Naive thymus-derived CD4-positive, alpha-beta T cell (primary cell): ENCODE measurements at regions of chr9 and their contacts with region 1.

Region 1: DNA sequence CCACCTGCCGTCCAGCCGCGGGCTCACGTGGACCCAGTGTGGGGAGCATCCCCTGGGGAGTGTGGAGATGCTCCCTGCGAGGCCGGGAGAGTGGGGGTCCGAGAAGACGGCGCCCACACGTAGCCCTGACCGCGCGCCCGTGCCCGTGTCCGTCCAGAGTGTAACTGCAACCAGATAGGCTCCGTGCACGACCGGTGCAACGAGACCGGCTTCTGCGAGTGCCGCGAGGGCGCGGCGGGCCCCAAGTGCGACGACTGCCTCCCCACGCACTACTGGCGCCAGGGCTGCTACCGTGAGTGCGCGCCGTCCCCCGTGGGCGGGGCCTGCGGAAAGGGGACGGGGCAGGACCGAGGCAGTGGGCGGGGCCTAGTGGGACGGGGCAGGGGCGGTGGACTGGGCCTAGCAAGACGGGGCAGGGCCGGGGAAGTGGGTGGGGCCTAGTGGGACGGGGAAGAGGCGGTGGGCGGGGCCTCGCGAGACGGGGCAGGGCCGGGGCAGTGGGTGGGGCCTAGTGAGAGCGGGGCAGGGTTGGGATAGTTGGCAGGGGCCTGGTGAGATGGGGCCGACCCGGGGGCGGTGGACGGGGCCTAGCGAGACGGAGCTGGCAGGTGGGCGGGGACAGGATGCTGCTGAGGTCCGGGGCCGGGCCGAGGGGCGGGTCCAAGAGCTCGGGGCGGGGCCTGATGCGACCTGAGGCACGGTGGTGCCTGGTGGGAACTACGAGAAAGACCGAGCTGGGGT is 79.1 kb downstream of the NTNG2 start:
- DNase-seq: peak; percentile 98 to 100 (median 99)
- ATAC-seq: peak; percentile 94
- H3K4me3 ChIP-seq: peak overlapping the region; percentile 77
- H3K4me3 Mint-ChIP-seq: peak overlapping the region; percentile 97 to 99 (median 98)
- H3K27ac ChIP-seq: peak overlapping the region; percentile 69
- H3K27ac Mint-ChIP-seq: peak overlapping the region; percentile 90 to 96 (median 94)
- H3K4me1 ChIP-seq: peaks cover 11 to 17% of the 10 kb centered on the region in 2 donors
- H3K4me1 Mint-ChIP-seq: peaks cover 5 to 24% (median 21%) of the 10 kb centered on the region in 7 donors
- H3K27me3 ChIP-seq: no peaks in the 10 kb centered on the region
- H3K27me3 Mint-ChIP-seq: peaks cover 0 to 15% (median 0%) of the 10 kb centered on the region in 5 donors

Region 2: DNA sequence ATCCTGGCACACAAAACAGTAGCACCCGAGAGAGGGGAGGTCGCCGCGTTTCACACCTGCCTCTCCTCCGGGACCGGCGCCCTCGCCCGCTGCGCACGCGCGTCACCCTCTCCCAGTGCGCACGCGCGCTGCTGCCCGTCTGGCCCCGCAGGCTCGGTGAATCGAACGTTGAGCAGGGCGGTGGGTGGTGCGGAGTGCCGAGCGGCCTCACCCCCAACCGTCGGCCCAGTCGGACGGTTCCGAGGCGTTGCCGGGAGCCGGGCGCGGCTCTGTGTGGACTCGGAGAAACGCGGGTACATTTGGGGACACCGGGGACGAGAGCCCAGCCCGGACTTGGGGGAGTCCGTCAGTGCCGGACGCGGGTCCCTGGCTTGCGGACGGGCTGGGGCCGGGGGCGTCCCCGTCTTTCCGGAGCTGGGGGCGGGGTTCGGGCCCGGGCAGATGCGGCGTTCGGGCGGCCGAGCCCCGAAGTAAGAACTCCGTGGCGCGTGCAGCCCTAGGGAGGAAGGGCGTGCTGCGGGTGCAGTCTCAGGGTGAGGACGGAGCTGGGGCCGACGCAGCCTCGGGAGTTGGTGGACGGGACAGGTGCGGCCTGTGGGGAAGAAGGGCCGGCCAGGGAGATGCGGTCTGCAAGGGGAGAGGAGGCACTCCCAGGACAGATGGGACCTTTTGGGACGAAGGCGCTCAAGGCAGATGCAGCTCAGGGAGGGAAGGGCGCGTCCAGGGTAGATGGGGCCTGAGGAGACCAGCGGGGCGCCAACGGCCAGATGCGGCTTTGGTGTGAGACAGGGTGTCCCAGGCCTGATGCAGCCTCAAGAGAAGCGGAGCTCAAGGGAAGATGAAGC is 737.9 kb before region 1 on chr9 and contains the start of gene POMT1:
- CTCF ChIA-PET with region 1: interaction called, 3 read pairs
- POLR2A ChIA-PET with region 1: no interaction called
- intact Hi-C with region 1: loop called in 1 of 2 experiments (anchors 5 kb)
- DNase-seq: peak; percentile 85 to 93 (median 90)
- ATAC-seq: peak; percentile 77
- H3K4me3 ChIP-seq: peak within 1 kb of the TSS; percentile 79
- H3K4me3 Mint-ChIP-seq: peak within 1 kb of the TSS; percentile 89 to 99 (median 94)
- H3K27ac ChIP-seq: peak within 1 kb of the TSS; percentile 88
- H3K27ac Mint-ChIP-seq: peak within 1 kb of the TSS; percentile 88 to 98 (median 93)
- H3K4me1 ChIP-seq: peaks cover 41 to 42% of the 10 kb centered on the region in 2 donors
- H3K4me1 Mint-ChIP-seq: peaks cover 51 to 73% (median 60%) of the 10 kb centered on the region in 7 donors
- H3K27me3 ChIP-seq: no peaks in the 10 kb centered on the region
- H3K27me3 Mint-ChIP-seq: no peaks in the 10 kb centered on the region
- total RNA-seq, gene POMT1: 40.0 to 55.8 (median 47.7) TPM

Region 3: GRCh38 chr9:131762356-131762932 is 478.5 kb before region 1 on chr9:
- CTCF ChIA-PET with region 1: interaction called, 8 read pairs
- POLR2A ChIA-PET with region 1: no interaction called
- intact Hi-C with region 1: loop called (anchors 1 kb)
- DNase-seq: peak; percentile 47 to 87 (median 68)
- ATAC-seq: peak; percentile 98
- H3K4me3 ChIP-seq: no peak overlapping the region
- H3K4me3 Mint-ChIP-seq: peak overlapping the region in 1 of 10 donors; percentile 19
- H3K27ac ChIP-seq: no peak overlapping the region
- H3K27ac Mint-ChIP-seq: no peak overlapping the region
- H3K4me1 ChIP-seq: no peaks in the 10 kb centered on the region
- H3K4me1 Mint-ChIP-seq: no peaks in the 10 kb centered on the region
- H3K27me3 ChIP-seq: no peaks in the 10 kb centered on the region
- H3K27me3 Mint-ChIP-seq: peaks cover 0 to 39% (median 9%) of the 10 kb centered on the region in 5 donors

Region 4: DNA sequence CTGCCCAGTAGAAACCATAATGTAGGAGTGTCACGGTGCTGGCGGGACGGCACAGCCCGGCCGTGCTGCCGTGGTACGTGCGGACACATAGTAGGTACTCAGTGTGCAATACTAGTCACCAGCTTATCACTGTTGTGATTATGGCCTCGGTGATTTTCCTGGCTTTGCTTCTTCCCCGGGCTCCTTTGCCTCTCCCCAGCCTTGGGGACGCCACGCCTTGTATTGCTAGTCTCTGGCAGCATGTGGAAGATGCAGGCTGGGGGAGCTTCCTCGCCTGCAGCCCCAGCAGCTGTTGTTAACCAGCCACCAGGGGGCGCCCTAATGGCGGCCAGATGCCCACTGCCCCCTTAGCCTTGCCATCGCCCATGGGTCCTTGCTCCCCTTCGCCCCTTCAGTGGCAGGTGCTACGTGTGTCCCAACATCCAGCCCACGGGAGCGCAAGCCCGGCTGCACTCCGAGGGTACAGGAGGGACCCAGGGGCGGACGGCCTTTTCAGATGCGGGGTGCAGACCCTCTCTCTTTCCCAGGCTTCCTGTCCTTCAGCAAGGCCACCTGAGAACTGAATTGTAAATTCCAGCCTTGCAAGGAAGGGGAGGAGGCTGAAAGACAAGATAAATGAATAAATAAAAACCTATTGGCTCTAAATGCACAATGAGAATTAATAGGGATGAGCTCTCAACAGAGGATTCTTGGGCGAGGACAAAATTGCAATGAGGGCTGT is 71.1 kb before region 1 on chr9:
- CTCF ChIA-PET with region 1: interaction called, 40 read pairs
- POLR2A ChIA-PET with region 1: no interaction called
- intact Hi-C with region 1: loop called (anchors 1 kb)
- DNase-seq: peak in 8 of 9 donors; percentile 8 to 70 (median 51)
- ATAC-seq: peak; percentile 69
- H3K4me3 ChIP-seq: no peak overlapping the region
- H3K4me3 Mint-ChIP-seq: no peak overlapping the region
- H3K27ac ChIP-seq: no peak overlapping the region
- H3K27ac Mint-ChIP-seq: peak overlapping the region in 1 of 9 donors; percentile 6
- H3K4me1 ChIP-seq: no peaks in the 10 kb centered on the region
- H3K4me1 Mint-ChIP-seq: peaks cover 0 to under 1% (median 0%) of the 10 kb centered on the region in 7 donors
- H3K27me3 ChIP-seq: no peaks in the 10 kb centered on the region
- H3K27me3 Mint-ChIP-seq: peaks cover 25 to 38% (median 33%) of the 10 kb centered on the region in 5 donors

Region 5: GRCh38 chr9:132185073-132186012 is 55.6 kb before region 1 on chr9:
- CTCF ChIA-PET with region 1: no interaction called
- POLR2A ChIA-PET with region 1: no interaction called
- intact Hi-C with region 1: no loop called
- DNase-seq: no peak
- ATAC-seq: no peak
- H3K4me3 ChIP-seq: no peak overlapping the region
- H3K4me3 Mint-ChIP-seq: no peak overlapping the region
- H3K27ac ChIP-seq: no peak overlapping the region
- H3K27ac Mint-ChIP-seq: peak overlapping the region in 1 of 9 donors; percentile 25
- H3K4me1 ChIP-seq: no peaks in the 10 kb centered on the region
- H3K4me1 Mint-ChIP-seq: peaks cover 0 to 3% (median 0%) of the 10 kb centered on the region in 7 donors
- H3K27me3 ChIP-seq: no peaks in the 10 kb centered on the region
- H3K27me3 Mint-ChIP-seq: peaks cover 0 to 29% (median 15%) of the 10 kb centered on the region in 5 donors

Region 6: GRCh38 chr9:132944302-132945185 is 703.6 kb after region 1 on chr9 and contains the start of gene TSC1:
- CTCF ChIA-PET with region 1: no interaction called
- POLR2A ChIA-PET with region 1: interaction called, 3 read pairs
- intact Hi-C with region 1: loop called in 1 of 2 experiments (anchors 10 kb)
- DNase-seq: peak; percentile 96 to 99 (median 98)
- ATAC-seq: peak; percentile 94
- H3K4me3 ChIP-seq: peak within 1 kb of the TSS; percentile 93
- H3K4me3 Mint-ChIP-seq: peak within 1 kb of the TSS; percentile 90 to 99 (median 98)
- H3K27ac ChIP-seq: peak within 1 kb of the TSS; percentile 94
- H3K27ac Mint-ChIP-seq: peak within 1 kb of the TSS; percentile 99 to 100 (median 100)
- H3K4me1 ChIP-seq: peaks cover 8 to 14% of the 10 kb centered on the region in 2 donors
- H3K4me1 Mint-ChIP-seq: peaks cover 15 to 45% (median 27%) of the 10 kb centered on the region in 7 donors
- H3K27me3 ChIP-seq: no peaks in the 10 kb centered on the region
- H3K27me3 Mint-ChIP-seq: peaks cover 0 to 3% (median 0%) of the 10 kb centered on the region in 5 donors
- total RNA-seq, gene TSC1: 38.1 to 98.3 (median 59.6) TPM